ENCODE measurements at regions of chr1 and their contacts with region 1.

Region 1: DNA sequence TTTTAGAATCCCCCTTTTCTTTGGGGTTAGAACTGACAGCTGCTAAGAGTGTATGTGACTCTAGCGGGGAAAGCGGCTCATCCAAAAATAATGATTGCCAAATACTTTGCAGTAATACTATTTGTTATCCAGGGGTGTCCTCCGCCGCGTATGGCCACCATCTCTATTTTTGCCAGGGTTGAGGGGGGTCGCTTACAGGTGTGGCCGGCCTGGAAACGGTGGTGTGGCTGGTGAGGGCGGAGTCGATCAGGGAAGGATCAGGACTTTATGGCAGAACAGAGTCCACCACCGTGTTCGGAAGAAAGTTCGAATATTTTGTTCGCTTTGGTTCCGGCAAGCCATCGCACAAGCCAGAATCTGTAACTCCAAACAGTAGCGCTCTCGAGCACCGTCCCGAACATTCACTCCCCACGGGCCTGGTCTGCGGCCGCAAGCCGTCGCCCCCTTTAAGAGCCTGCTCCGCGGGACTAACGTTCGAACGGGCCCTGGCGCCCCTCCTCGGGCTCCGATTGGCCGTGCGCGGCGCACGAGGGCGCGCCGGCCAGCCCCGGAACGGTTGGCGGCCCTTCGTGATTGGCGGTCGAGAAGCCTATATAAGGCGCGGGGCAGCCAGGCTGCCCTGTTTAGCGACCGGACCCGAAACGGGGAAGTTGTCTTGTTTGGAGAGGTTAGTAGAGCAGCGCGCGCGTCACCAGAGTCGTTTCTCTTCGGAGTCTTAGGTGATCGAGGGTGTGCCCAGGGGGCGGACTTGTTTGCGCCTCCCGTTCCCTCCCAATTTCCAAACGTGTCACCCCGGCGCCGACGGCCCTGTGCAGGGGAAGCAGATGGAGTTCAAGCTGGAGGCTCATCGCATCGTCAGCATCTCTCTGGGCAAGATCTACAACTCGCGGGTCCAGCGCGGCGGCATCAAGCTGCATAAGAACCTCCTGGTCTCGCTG is at the start of gene IER5:
- DNase-seq: peak; percentile 95
- ATAC-seq: peak; percentile 72
- H3K4me3 ChIP-seq: peak within 1 kb of the TSS; percentile 99
- H3K27ac ChIP-seq: peak within 1 kb of the TSS; percentile 90
- H3K4me1 ChIP-seq: peaks cover 18% of the 10 kb centered on the region
- H3K27me3 ChIP-seq: no peaks in the 10 kb centered on the region
- CTCF ChIP-seq: no peak
- total RNA-seq, gene IER5: 100 and 126 TPM in 2 replicates

Region 2: DNA sequence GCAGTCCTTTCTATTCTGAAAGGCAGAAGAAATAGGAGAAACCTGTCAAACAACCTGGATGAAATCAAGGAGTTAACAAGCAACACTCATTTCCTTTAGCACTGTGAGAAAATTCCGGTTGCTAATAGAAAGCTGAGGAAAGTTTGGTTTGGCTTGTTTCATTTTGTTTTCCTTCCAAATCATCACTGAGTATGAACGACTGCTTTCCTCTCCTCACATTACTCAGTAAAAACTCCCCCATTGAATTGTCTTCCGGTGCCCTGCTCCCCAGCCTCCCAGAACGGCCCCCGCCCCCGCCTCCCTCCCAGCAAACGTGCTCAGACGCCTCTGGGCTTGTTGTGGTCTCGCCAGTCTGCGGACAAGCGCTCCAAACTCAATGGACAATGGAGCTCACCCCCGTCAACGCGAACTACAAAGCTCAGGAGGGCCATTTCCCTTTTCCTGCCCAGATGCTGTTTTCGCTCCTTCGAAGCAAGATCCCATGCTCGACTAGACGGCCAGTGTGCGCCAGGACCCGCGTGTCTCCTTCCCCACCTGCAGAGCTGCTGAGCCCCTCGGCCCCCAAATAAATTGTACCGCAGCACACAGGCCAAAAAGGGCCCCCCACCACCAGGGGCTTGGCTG is 66.4 kb before region 1 on chr1:
- CTCF ChIA-PET with region 1: no interaction called
- POLR2A ChIA-PET with region 1: no interaction called
- intact Hi-C with region 1: loop called (anchors 5 kb)
- DNase-seq: peak; percentile 83
- ATAC-seq: peak; percentile 58
- H3K4me3 ChIP-seq: peak overlapping the region; percentile 87
- H3K27ac ChIP-seq: peak overlapping the region; percentile 96
- H3K4me1 ChIP-seq: peaks cover 15% of the 10 kb centered on the region
- H3K27me3 ChIP-seq: no peaks in the 10 kb centered on the region
- CTCF ChIP-seq: no peak

Region 3: GRCh38 chr1:181038399-181038873 is 49.9 kb before region 1 on chr1:
- CTCF ChIA-PET with region 1: no interaction called
- POLR2A ChIA-PET with region 1: no interaction called
- intact Hi-C with region 1: loop called (anchors 5 kb)
- DNase-seq: peak; percentile 82
- ATAC-seq: peak; percentile 60
- H3K4me3 ChIP-seq: no peak overlapping the region
- H3K27ac ChIP-seq: no peak overlapping the region
- H3K4me1 ChIP-seq: peaks cover 18% of the 10 kb centered on the region; the same call in 1 of the 2 replicates
- H3K27me3 ChIP-seq: no peaks in the 10 kb centered on the region
- CTCF ChIP-seq: peak; percentile 68

Region 4: DNA sequence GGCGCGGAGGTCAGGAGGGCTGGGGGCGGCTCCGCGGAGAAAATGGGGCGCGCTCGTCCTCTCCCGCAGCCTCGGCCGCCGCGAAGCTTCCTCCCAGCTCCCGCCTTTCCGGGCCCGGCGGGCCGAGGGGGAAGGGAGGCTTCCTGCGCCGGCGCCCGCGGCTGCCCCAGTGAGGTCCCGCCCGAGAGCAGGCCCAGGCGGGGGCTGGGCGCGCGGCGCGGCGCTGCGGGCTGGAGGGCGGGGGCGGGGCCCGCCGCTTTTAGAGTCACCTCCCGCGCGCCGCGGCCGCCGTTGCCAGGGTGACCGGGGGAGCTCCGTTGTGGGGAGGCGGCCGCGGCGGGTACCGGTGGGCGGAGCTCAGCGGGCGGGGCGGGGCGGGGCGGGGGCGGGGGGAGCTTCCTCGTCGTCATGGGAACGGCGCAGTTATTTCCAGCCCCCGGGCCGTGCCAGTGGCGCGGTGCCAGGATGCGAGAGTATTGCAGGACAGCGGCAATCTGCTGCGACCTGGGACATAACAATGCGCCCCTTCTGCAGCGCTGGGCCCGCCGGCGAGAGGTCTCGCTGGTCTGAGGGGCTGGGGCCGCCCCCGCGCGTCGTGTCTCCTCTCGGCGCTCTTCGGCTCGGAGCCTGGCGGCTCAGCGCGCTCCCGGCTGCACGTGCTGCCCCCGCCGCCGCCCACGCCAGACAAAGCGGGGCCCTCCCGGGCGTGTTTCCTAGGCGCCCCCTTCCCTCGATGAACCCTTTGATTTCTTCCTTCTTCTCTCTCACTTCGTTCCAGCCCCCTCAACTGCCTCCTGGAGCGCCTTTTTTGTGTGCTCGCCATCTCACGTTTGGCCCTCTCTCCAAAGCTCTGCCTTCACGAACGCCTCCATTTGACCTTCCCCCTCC is 17.0 kb after region 1 on chr1:
- CTCF ChIA-PET with region 1: no interaction called
- POLR2A ChIA-PET with region 1: interaction called, 21 read pairs
- intact Hi-C with region 1: loop called (anchors 2 kb)
- DNase-seq: peak; percentile 85
- ATAC-seq: peak; percentile 72
- H3K4me3 ChIP-seq: peak overlapping the region; percentile 68
- H3K27ac ChIP-seq: peak overlapping the region; percentile 91
- H3K4me1 ChIP-seq: peaks cover 64% of the 10 kb centered on the region
- H3K27me3 ChIP-seq: no peaks in the 10 kb centered on the region
- CTCF ChIP-seq: no peak

Region 5: GRCh38 chr1:181128592-181129497 is 40.5 kb after region 1 on chr1:
- CTCF ChIA-PET with region 1: no interaction called
- POLR2A ChIA-PET with region 1: no interaction called
- intact Hi-C with region 1: no loop called
- DNase-seq: no peak
- ATAC-seq: no peak
- H3K4me3 ChIP-seq: no peak overlapping the region
- H3K27ac ChIP-seq: peak overlapping the region; percentile 96
- H3K4me1 ChIP-seq: peaks cover 23% of the 10 kb centered on the region
- H3K27me3 ChIP-seq: no peaks in the 10 kb centered on the region
- CTCF ChIP-seq: no peak

Region 6: GRCh38 chr1:181142096-181142958 is 54.0 kb after region 1 on chr1:
- CTCF ChIA-PET with region 1: no interaction called
- POLR2A ChIA-PET with region 1: interaction called, 12 read pairs
- intact Hi-C with region 1: loop called (anchors 1 kb)
- DNase-seq: peak; percentile 88
- ATAC-seq: peak; percentile 65
- H3K4me3 ChIP-seq: peak overlapping the region; percentile 51; the same call in 1 of the 2 replicates
- H3K27ac ChIP-seq: peak overlapping the region; percentile 99
- H3K4me1 ChIP-seq: peaks cover 38% of the 10 kb centered on the region
- H3K27me3 ChIP-seq: no peaks in the 10 kb centered on the region
- CTCF ChIP-seq: peak; percentile 92

Measured in PC-3 (cell line).